PC-9 (cell line): ENCODE measurements at regions of chr20 and their contacts with region 1.

Region 1: DNA sequence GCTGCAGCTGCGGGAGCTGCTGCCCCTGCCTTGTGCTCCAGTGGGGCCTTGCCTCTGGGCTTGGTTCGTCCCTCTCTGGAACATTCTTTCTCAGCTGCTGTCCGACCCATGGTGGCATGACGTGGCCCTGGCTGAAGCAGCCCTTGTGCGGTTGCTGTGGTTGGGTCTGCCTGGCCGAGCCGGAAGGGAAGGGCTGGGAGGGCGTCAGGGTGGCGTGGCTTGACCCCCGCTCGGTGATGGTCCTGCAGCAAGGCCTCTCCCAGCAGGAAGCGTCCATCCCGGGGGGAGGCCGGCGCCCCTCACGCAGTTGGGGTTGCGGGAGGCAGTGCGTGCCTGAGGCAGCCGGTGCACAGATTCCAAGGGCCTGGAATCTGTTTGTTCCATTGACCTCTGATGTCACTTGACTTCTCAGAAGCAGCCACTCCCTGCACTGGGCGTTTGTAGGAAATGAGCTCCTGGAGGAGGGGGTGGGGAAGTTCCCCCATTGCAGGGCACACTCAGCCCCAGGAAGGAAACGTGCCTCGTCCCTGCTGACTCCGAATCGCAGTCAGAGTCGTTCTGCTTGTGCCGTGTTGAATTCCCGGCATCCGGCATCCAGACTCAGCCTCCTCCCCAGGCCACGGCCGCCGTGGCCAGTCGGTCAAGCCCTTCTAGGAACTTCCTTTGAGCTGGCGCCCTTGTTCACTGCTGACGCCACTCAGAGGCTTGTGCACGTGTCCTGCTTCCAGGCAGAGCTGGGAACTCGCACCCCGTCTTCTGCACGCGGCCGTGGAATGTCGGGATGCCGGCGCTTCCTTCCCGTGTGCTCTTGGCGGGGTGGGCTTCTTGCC is 9.7 kb upstream of the TNFRSF6B start:
- DNase-seq: peak in 1 of 2 experiments; percentile 73
- H3K4me3 ChIP-seq: no peak overlapping the region
- H3K27ac ChIP-seq: no peak overlapping the region
- H3K4me1 ChIP-seq: peaks cover 64% of the 10 kb centered on the region
- H3K27me3 ChIP-seq: no peaks in the 10 kb centered on the region
- CTCF ChIP-seq: no peak

Region 2: DNA sequence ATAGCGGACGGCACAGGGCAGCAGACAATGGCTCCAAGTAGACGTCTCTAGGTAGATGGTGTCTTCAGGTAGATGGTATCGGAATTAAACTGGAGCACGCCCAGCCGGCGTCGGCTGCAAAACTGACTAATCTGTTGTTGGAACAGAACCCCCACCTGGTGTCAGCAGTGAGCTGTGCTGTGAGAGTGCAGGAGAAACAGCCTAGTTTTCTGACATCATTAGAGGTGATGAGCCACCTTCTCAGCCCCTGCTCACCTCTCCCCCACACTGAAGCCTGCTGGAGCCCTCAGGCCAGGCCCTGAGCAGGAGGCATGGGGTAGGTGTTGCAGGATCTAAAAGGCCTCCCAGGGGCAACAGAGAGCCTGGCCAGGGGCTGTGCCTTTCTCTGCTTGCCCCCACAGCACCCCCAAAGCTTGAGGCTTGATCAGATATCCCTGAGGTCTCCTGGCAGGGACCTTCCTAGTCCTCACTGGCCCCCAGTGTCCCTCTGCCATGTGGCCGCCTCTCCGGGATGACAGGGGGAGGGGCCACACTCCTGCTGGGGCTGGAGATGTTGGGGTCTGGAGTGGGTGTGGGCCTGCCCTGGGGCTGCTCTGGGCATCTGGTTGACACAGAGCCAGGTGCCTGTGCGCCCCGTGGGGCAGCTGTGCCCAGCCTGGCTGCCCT is 105.8 kb before region 1 on chr20:
- CTCF ChIA-PET with region 1: interaction called, 3 read pairs
- POLR2A ChIA-PET with region 1: no interaction called
- intact Hi-C with region 1: loop called (anchors 10 kb)
- DNase-seq: peak; percentile 71 to 75
- H3K4me3 ChIP-seq: no peak overlapping the region
- H3K27ac ChIP-seq: no peak overlapping the region
- H3K4me1 ChIP-seq: peaks cover 7% of the 10 kb centered on the region
- H3K27me3 ChIP-seq: no peaks in the 10 kb centered on the region
- CTCF ChIP-seq: peak; percentile 73

Region 3: DNA sequence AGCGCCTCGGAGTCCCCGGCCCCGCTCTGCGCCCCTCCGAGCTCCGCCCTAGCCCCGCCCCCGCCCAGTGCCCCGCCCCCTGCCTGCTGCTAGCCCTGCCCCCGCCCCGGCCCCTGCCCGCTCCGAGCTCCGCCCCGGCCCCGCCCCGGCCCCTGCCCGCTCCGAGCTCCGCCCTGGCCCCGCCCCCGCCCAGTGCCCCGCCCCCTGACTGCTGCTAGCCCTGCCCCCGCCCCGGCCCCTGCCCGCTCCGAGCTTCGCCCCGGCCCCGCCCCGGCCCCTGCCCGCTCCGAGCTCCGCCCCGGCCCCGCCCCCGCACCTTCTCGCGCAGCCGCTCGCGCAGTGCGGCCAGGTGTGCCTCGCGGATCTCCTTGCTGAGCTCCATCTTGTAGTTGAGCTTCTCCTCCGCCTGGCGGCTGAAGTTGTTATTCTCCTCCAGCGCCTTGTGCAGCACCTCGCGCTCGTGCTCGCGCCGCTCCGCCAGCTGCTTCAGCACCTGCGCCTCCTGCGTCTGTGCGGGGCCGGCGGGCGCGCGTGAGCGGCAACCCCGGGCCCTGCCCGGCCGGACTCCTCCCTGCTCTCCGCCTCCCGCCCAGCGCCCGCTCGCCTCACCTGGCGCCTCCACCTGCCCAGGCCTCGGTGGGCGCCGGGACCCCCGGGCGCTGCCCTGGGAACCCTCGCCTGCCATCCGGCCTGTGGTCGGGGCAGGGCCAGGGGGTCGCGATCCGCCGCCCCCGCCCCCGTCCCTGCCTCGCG is 44.7 kb before region 1 on chr20:
- CTCF ChIA-PET with region 1: no interaction called
- POLR2A ChIA-PET with region 1: interaction called, 38 read pairs
- intact Hi-C with region 1: no loop called
- DNase-seq: peak; percentile 90 to 97
- H3K4me3 ChIP-seq: peak overlapping the region; percentile 92
- H3K27ac ChIP-seq: peak overlapping the region; percentile 21
- H3K4me1 ChIP-seq: peaks cover 16% of the 10 kb centered on the region
- H3K27me3 ChIP-seq: no peaks in the 10 kb centered on the region
- CTCF ChIP-seq: peak; percentile 65

Region 4: GRCh38 chr20:63648895-63649589 is 37.7 kb before region 1 on chr20:
- CTCF ChIA-PET with region 1: no interaction called
- POLR2A ChIA-PET with region 1: interaction called, 11 read pairs
- intact Hi-C with region 1: no loop called
- DNase-seq: no peak
- H3K4me3 ChIP-seq: no peak overlapping the region
- H3K27ac ChIP-seq: no peak overlapping the region
- H3K4me1 ChIP-seq: no peaks in the 10 kb centered on the region; the same call in 1 of the 2 replicates
- H3K27me3 ChIP-seq: no peaks in the 10 kb centered on the region
- CTCF ChIP-seq: no peak

Region 5: GRCh38 chr20:63657937-63658748 is 28.6 kb before region 1 on chr20 and contains the start of gene RTEL1:
- CTCF ChIA-PET with region 1: no interaction called
- POLR2A ChIA-PET with region 1: no interaction called
- intact Hi-C with region 1: loop called (anchors 1 kb)
- DNase-seq: peak; percentile 79 to 95
- H3K4me3 ChIP-seq: peak within 1 kb of the TSS; percentile 90
- H3K27ac ChIP-seq: no peak within 1 kb of the TSS
- H3K4me1 ChIP-seq: peaks cover 18% of the 10 kb centered on the region
- H3K27me3 ChIP-seq: no peaks in the 10 kb centered on the region
- CTCF ChIP-seq: no peak
- total RNA-seq, gene RTEL1: 36.0 and 37.4 TPM in 2 replicates

Region 6: GRCh38 chr20:63698739-63699465 is 12.2 kb after region 1 on chr20:
- CTCF ChIA-PET with region 1: no interaction called
- POLR2A ChIA-PET with region 1: interaction called, 7 read pairs
- intact Hi-C with region 1: loop called (anchors 1 kb)
- DNase-seq: peak; percentile 79 to 90
- H3K4me3 ChIP-seq: peak overlapping the region; percentile 27; the same call in 1 of the 2 replicates
- H3K27ac ChIP-seq: peak overlapping the region; percentile 65
- H3K4me1 ChIP-seq: peaks cover 20% of the 10 kb centered on the region
- H3K27me3 ChIP-seq: no peaks in the 10 kb centered on the region
- CTCF ChIP-seq: no peak

Region 7: DNA sequence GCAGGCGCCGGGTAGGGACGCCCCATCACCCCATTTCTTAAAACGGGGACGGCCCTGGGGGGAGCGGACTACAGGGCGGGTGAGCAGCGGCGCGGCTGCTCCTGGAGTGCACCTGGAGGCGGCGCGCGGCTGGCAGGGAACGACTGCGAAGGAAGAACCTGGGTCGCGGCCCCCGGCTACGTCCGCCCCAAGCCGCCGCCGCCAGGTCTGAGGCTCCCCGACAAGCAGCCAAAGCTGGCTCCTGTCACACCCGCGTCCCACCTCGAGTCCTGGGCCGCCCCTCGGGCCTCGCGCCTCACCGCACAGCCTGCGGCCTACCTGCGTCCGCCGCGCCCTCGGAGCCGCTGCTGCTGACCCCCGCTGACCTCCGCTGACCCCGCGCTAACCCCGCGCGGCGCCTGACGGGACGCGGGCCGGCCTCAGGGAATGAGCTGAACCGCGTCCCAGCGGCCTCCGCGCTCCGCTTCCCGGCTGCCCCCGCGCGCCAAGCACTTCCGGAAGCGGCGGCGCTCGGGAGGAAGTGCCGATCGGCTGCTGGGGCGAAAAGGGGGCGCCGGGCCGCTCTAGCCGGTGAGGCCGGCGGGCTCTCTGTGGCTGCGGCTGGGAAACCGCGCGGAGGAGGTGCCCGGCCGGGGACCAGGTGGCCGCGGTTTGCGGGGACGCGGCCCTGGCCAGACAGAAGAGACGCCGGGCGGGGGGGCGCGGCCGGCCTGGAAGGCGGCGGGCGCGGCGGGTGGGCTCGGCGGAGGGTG is 21.0 kb after region 1 on chr20 and contains the starts of genes ARFRP1 and ZGPAT:
- CTCF ChIA-PET with region 1: no interaction called
- POLR2A ChIA-PET with region 1: no interaction called
- intact Hi-C with region 1: loop called (anchors 1 kb)
- DNase-seq: peak; percentile 67 to 91
- H3K4me3 ChIP-seq: peak within 1 kb of the TSS; percentile 96
- H3K27ac ChIP-seq: peak within 1 kb of the TSS; percentile 37
- H3K4me1 ChIP-seq: peaks cover 18% of the 10 kb centered on the region
- H3K27me3 ChIP-seq: no peaks in the 10 kb centered on the region
- CTCF ChIP-seq: no peak
- total RNA-seq, gene ARFRP1: 59.1 and 71.1 TPM in 2 replicates
- total RNA-seq, gene ZGPAT: 27.2 and 31.4 TPM in 2 replicates